Activated T-helper 1 cell treated with anti-CD3 and anti-CD28 coated beads, Interleukin-12 subunit alpha, Interleukin-12 subunit beta, Interleukin-2, Interleukin-4 antibody, amounts not matched to agents 30 ng/mL and 10 ng/mL and 1 ng/mL, durations not matched to agents 14 hours and 24 hours and 36 hours (primary cell): ENCODE measurements at regions of chr16 and their contacts with region 1.

Region 1: GRCh38 chr16:81737885-81738786 is 41.0 kb upstream of the PLCG2 start:
- DNase-seq: peak; percentile 78
- H3K4me3 Mint-ChIP-seq: peak overlapping the region; percentile 40
- H3K27ac Mint-ChIP-seq: no peak overlapping the region
- H3K4me1 Mint-ChIP-seq: peaks cover 16% of the 10 kb centered on the region
- H3K27me3 Mint-ChIP-seq: peaks cover 7% of the 10 kb centered on the region

Region 2: DNA sequence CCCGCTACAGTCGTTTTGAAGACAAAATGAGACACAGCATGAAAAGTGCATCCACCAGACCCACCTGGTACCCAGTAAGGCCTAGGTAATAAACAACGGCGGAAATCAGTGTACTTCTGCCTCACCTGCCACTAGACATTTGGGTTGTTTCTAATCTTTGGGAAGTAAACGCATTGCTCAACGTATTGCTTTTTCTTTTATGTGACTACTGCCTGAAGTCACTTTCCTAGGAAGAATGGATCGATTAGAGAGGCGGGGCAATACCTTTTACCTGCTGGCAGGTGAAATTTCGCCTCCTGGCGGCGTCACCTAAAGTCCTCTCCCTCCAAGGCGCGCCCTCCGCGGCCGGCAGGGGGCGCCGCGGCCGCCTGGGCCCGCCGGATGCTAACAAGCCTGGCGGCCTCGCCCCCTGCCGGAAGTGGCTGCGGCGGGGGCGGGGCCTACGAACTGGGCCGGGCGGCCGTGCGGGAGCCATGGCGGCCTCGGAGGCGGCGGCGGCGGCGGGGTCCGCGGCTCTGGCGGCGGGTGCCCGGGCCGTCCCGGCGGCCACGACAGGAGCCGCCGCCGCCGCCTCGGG is 702.6 kb before region 1 on chr16 and contains the start of gene ATMIN:
- intact Hi-C with region 1: loop called (anchors 1 kb)
- DNase-seq: peak; percentile 85
- H3K4me3 Mint-ChIP-seq: peak within 1 kb of the TSS; percentile 88
- H3K27ac Mint-ChIP-seq: peak within 1 kb of the TSS; percentile 65
- H3K4me1 Mint-ChIP-seq: peaks cover 27% of the 10 kb centered on the region
- H3K27me3 Mint-ChIP-seq: no peaks in the 10 kb centered on the region
- total RNA-seq, gene ATMIN: 31.2 and 32.3 TPM in 2 replicates

Region 3: DNA sequence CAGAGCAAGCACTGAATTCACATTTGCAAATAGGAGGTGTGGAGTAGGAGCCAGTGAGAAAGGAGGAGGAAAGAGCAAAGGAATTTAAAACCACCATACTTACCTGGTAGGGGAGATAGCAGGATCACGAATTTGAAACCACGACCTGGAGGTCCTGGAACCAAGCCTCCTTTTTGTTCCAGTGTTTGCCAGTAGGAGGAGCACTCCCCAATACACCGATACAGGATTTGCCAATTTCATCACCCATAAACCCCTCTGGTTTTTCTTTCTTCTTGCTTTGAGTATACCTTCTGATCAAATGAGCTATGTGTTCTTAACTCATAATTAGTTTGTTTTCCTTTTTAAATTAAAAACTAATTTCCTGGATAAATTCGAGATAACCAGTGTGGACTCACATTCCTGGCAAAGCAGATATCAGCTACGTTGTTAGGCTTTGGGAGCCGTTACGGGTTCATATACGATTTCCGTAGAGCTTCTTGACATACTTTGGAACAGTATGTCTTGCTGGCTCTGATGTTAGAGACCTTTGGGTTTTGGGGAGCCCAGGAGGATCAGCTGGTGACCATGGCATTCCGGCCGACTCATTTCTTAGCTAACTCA is 477.0 kb before region 1 on chr16:
- intact Hi-C with region 1: loop called (anchors 1 kb)
- DNase-seq: peak; percentile 1
- H3K4me3 Mint-ChIP-seq: no peak overlapping the region
- H3K27ac Mint-ChIP-seq: no peak overlapping the region
- H3K4me1 Mint-ChIP-seq: no peaks in the 10 kb centered on the region
- H3K27me3 Mint-ChIP-seq: peaks cover 9% of the 10 kb centered on the region

Region 4: DNA sequence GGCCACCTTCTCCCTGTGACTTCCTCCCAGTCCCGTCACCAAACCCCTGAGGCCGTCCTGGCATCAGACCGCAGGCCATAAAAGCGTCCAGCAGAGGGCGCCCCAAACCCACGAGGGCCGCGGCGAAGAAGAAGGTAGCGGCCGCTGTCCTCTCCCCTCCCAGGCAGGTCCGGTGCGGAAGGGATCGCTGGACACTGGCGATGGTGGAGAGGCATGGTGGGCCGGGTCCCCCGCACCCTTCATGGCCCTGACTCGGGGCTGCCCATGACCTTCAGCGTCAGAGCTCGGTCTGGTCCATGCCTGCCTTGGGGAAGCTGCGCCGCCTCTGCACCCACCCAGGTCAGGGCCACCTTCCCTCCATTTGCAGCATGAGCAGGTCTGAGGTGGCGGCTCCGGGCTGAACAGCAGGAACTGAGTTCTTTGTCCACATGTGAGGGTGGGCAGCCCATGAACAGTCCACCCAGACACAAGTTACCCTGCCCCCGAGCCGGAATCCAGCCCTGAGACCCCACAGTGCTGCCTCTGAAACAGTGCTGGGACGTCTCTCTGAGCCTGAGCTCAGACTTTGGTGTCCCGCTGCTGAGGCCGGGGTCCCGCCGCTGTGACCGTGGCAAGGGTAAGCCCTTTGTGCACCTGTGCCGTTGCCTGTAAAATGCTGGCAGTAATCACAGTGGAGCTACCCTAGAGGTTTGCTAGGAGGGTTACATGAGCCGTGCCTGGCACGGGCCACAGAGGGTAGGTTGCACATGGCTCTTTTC is 334.3 kb before region 1 on chr16:
- intact Hi-C with region 1: loop called (anchors 1 kb)
- DNase-seq: peak; percentile 65
- H3K4me3 Mint-ChIP-seq: no peak overlapping the region
- H3K27ac Mint-ChIP-seq: no peak overlapping the region
- H3K4me1 Mint-ChIP-seq: no peaks in the 10 kb centered on the region
- H3K27me3 Mint-ChIP-seq: peaks cover 4% of the 10 kb centered on the region

Region 5: GRCh38 chr16:81686391-81687130 is 51.6 kb before region 1 on chr16:
- intact Hi-C with region 1: no loop called
- DNase-seq: no peak
- H3K4me3 Mint-ChIP-seq: no peak overlapping the region
- H3K27ac Mint-ChIP-seq: no peak overlapping the region
- H3K4me1 Mint-ChIP-seq: peaks cover 18% of the 10 kb centered on the region
- H3K27me3 Mint-ChIP-seq: no peaks in the 10 kb centered on the region

Region 6: DNA sequence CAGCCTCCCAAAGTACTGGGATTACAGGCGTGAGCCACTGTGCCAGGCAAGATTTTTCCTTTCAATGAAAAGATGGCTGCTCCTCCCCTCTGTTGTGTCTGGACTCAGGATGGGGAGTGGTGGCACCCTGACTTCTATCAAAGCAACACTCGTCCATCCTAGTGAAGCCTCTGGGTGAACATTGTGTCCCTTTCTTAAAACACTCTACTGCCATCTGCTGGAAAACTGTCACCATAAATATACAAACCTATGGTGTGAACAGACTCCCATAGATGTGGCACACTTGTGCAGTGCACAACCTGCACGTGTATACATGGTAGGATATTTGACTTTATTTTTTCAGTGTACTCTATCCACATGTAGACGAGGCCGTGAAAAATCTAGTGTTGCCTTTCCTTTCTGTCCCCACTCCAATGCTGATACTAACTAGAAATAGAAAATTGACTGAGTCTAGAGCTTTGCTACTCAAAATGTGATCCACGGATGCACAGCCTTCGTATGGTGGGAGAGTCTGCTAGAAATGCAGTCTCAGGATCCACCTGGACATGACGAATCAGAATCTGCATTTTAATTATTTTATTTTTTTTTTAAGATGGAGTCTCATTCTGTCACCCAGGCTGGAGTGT is 14.9 kb before region 1 on chr16:
- intact Hi-C with region 1: loop called (anchors 2 kb)
- DNase-seq: peak; percentile 30
- H3K4me3 Mint-ChIP-seq: no peak overlapping the region
- H3K27ac Mint-ChIP-seq: no peak overlapping the region
- H3K4me1 Mint-ChIP-seq: peaks cover 21% of the 10 kb centered on the region
- H3K27me3 Mint-ChIP-seq: peaks cover 12% of the 10 kb centered on the region